BJ (cell line): ENCODE measurements at regions of chr1 and their contacts with region 1.

Region 1: GRCh38 chr1:6245086-6245868 is 1.3 kb downstream of the HES3 start:
- DNase-seq: no peak
- H3K4me3 ChIP-seq: peak overlapping the region; percentile 32
- H3K27me3 ChIP-seq: peaks cover 27% of the 10 kb centered on the region
- CTCF ChIP-seq: peak; percentile 79

Region 2: DNA sequence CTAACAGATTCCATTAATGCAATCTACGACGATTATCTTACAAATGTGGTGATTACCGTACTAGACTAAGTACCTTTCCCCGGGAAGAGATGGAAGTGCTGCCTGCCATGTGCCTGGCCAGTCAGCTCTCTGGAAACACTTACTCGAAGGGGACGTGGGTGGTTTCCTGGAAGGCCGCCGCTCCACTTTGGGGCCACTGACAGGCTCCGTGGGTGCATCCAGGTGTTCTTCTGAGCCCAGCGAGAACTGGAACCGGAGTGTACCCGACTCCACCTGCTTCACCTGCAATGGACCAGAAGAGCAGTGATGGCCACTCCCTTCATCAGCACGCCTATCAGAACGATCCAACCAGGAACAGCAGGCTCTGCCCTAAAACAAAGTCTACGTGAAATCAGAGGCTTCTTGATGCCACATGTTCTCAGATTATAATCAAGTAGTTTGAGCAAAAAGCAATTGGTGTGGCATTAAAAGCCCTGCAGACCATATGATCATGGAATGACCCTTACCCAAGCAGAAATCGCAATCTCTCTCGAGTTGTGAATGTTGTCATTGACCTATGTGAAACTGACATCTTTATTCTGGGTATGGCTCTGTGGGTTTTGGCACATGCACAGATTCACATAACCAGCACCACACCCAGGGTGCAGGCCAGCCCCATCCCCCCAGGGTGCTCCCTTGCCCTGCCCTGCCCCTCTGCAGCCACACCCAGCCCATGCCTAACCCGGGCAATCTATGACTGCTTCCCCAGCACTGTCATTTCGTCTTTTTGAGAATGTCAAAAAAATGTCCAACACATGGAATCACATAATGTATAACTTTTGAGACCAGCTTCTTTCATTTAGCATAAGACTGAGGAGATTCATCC is 317.5 kb before region 1 on chr1:
- CTCF ChIA-PET with region 1: no interaction called
- POLR2A ChIA-PET with region 1: no interaction called
- DNase-seq: no peak
- H3K4me3 ChIP-seq: no peak overlapping the region
- H3K27me3 ChIP-seq: no peaks in the 10 kb centered on the region
- CTCF ChIP-seq: no peak

Region 3: GRCh38 chr1:6052543-6053205 is 192.6 kb before region 1 on chr1:
- CTCF ChIA-PET with region 1: interaction called, 21 read pairs
- POLR2A ChIA-PET with region 1: no interaction called
- DNase-seq: no peak
- H3K4me3 ChIP-seq: no peak overlapping the region
- H3K27me3 ChIP-seq: 0 out of 2 replicates have a peak, but pooled peaks cover 2% of the 10 kb centered on the region
- CTCF ChIP-seq: peak; percentile 55

Region 4: GRCh38 chr1:6108937-6109614 is 136.2 kb before region 1 on chr1:
- CTCF ChIA-PET with region 1: interaction called, 27 read pairs
- POLR2A ChIA-PET with region 1: no interaction called
- DNase-seq: no peak
- H3K4me3 ChIP-seq: no peak overlapping the region
- H3K27me3 ChIP-seq: no peaks in the 10 kb centered on the region
- CTCF ChIP-seq: peak; percentile 73

Region 5: DNA sequence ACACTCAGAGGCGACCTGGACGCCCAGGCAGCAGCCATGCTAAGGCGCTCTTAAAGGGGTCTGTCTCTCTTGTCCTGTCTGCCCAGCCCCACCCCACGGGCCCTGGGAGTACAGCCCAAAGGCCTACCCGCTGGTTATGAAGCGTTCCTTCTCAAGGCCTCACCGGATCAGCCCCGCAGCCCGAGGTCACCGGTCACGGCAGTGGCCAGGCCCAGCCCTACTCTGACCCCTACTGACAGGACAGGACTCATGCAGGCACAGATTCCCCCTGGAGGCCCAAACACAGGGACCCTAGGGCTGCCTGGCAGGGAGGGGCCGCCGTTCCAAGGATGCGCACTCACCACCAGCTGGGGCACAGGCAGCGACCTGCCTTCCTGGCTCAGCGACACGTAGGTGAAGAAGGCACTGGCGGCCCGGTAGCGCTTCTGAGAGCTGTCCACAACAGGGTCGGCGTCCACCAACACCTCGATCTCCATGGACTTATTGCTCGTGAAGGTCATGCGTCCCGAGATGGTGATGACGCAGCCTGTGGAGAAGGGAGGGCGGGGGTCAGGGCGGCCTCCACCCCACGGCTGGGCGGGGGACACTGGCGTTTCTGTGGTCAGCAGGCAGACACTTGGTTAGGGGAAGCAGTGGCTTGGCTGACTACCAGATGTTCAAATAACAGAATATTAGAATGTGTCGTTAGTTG is 35.6 kb after region 1 on chr1:
- CTCF ChIA-PET with region 1: interaction called, 10 read pairs
- POLR2A ChIA-PET with region 1: no interaction called
- DNase-seq: no peak
- H3K4me3 ChIP-seq: no peak overlapping the region
- H3K27me3 ChIP-seq: no peaks in the 10 kb centered on the region
- CTCF ChIP-seq: peak; percentile 51

Region 6: DNA sequence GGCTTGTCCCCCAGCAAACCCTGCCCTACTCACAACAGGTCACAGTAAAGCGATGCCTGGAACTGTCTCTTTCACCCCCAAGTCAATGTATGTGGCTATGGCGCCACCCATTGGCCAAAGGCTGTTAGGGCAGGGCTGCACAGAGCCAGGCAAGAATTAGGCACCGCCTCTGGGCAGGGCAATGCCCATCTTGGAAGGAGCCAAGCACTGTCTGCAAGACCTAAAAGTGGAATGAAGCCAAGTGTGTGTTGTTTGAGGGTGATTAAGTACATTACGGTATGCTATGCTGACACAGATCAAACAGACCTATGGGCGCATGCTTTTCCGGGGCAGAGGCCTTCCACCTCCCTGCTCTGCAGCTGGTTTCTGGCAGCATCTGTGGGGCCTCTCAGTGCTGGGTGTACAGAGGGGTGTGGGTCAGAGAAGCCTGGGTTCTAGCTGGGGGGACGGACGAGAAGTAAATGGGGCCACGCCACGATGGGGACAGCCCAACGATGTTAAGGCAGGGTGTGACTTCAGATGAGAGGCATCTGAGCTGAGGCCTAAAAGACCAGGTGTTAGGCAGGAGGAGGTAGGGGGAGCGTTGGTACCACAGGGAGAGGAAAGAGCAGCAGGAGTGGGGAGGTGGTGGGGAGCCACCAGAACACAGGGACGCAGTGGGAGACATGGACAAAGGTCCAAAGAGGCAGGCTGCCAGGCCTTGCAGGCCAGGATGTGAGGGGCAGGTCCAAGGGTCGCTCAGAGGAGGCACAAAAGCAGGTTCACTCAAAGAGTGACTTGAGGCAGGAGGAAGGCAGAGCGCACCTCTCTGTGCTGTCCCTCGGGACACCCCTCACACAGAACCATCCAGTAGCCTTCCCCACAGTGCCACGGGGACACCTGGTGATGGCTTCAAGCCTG is 98.5 kb after region 1 on chr1:
- CTCF ChIA-PET with region 1: interaction called, 264 read pairs
- POLR2A ChIA-PET with region 1: no interaction called
- DNase-seq: no peak
- H3K4me3 ChIP-seq: no peak overlapping the region
- H3K27me3 ChIP-seq: no peaks in the 10 kb centered on the region
- CTCF ChIP-seq: peak; percentile 96

Region 7: GRCh38 chr1:6401673-6402072 is 156.4 kb after region 1 on chr1:
- CTCF ChIA-PET with region 1: interaction called, 11 read pairs
- POLR2A ChIA-PET with region 1: no interaction called
- DNase-seq: no peak
- H3K4me3 ChIP-seq: no peak overlapping the region
- H3K27me3 ChIP-seq: peaks cover 2% of the 10 kb centered on the region; the same call in 1 of the 2 replicates
- CTCF ChIP-seq: no peak

Region 8: DNA sequence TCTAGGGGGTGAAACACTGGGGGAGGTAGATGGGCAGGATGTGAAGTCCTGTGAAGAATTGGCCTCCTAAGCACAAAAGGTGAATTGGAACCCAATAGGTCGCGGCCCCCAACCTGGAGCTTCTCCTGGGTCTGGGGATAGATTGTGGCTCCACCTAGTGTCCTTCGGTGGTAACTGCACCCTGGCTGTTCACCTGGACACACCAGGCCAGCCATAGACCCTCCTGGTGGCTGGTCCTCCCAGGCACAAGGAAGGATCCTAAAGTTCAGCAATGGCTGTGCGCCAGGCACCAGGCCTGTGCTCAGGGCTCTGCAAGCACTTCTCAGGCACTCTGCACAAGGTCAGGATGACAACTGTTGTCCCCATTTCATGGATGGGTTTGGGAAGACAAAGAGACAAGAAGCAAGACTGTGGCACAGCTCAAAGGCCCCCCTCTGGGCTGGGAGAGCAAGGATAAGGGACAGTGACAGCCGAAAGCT is 192.8 kb after region 1 on chr1:
- CTCF ChIA-PET with region 1: interaction called, 33 read pairs
- POLR2A ChIA-PET with region 1: no interaction called
- DNase-seq: no peak
- H3K4me3 ChIP-seq: no peak overlapping the region
- H3K27me3 ChIP-seq: peaks cover 14% of the 10 kb centered on the region
- CTCF ChIP-seq: peak; percentile 91

Region 9: DNA sequence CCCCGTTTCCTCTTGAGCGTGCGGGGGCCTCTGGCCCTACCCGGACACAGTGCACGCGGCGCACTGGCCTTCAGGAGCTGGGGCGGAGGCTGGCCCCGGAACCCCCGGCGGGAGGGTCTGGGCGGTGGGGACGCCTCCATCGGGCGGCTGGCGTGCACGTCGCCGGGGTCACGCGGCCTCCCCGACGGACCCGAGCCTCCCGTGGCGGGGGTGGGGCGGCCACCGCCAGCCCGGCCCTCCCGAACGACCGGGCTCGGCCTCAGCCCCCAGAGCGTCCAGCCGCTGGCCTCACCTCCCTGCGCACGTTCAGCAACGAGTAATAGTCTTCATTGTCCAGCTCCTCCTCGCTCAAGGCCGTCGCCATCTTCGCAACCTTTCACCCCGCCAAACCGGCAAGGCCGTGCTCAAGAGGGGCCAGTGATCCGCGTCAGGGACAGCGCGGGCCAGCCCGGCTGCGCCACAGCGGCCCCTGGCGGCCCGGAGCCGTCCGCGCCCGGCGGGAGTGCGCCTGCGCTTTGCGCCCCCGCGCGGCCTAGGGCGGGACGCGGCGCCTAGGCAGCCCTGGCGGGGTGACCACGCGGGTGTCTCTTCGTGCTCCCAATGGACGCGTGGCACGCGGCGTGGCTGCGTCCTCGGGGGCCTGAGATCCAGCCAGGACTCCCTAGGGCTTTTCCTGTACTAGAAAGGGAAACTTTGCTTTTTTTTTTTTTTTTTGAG is 456.3 kb after region 1 on chr1 and contains the start of gene DNAJC11:
- CTCF ChIA-PET with region 1: no interaction called
- POLR2A ChIA-PET with region 1: no interaction called
- DNase-seq: peak; percentile 31
- H3K4me3 ChIP-seq: peak within 1 kb of the TSS; percentile 71
- H3K27me3 ChIP-seq: no peaks in the 10 kb centered on the region
- CTCF ChIP-seq: peak; percentile 53
- polyA plus RNA-seq, gene DNAJC11: 29.8 and 36.0 TPM in 2 replicates